B cell (primary cell): ENCODE measurements at regions of chr6 and their contacts with region 1.

Region 1: DNA sequence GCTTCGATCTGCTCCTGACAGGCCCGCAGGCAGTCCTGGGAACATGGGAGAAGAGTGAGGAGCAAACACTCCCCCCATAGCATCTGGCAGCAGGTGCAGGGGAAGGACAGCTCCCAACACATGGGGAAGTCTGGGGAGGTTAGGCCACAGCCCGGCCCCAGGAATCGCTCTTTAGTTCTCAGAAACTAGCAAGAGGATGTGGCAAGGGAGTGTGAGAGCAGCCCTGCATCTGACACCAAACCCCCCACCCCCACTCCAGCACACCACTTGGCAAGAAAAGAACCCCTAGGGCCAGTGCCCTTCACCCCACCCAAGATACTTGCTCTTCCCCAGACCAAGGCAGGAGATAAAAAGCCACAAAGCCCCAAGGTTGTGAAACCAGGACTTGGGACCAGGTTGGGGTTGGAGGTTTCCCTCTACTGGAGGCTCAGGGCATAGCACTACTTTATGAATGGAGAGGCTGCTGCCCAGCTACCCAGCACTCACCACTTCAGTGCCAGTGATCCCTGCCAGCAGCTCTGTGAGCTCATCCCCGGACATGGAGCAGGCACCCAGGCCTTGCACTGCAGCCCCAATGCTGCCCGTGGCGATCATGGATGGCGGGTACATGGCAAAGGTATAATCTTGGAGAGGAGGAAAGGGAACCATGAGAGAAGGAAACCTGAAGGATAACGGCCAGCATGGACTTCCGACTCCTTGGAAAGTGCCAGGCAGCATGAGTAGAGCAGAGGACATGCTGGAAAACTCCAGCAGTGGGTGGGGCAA is 5.4 kb downstream of the CCND3 start:
- DNase-seq: peak; percentile 78
- ATAC-seq: peak; percentile 74
- H3K4me3 ChIP-seq: no peak overlapping the region
- H3K4me3 Mint-ChIP-seq: peak overlapping the region; percentile 56
- H3K27ac ChIP-seq: peak overlapping the region; percentile 10 to 59
- H3K27ac Mint-ChIP-seq: peak overlapping the region; percentile 87
- H3K4me1 ChIP-seq: peaks cover 64 to 71% of the 10 kb centered on the region in 2 donors
- H3K4me1 Mint-ChIP-seq: peaks cover 65% of the 10 kb centered on the region
- H3K27me3 ChIP-seq: no peaks in the 10 kb centered on the region
- H3K27me3 Mint-ChIP-seq: no peaks in the 10 kb centered on the region
- CTCF ChIP-seq: peak; percentile 83

Region 2: GRCh38 chr6:41846666-41847237 is 89.5 kb before region 1 on chr6:
- CTCF ChIA-PET with region 1: interaction called, 19 read pairs
- POLR2A ChIA-PET with region 1: no interaction called
- intact Hi-C with region 1: loop called (anchors 1 kb)
- DNase-seq: peak; percentile 70
- ATAC-seq: peak; percentile 49
- H3K4me3 ChIP-seq: no peak overlapping the region
- H3K4me3 Mint-ChIP-seq: no peak overlapping the region
- H3K27ac ChIP-seq: no peak overlapping the region
- H3K27ac Mint-ChIP-seq: no peak overlapping the region
- H3K4me1 ChIP-seq: no peaks in the 10 kb centered on the region
- H3K4me1 Mint-ChIP-seq: no peaks in the 10 kb centered on the region
- H3K27me3 ChIP-seq: no peaks in the 10 kb centered on the region
- H3K27me3 Mint-ChIP-seq: no peaks in the 10 kb centered on the region
- CTCF ChIP-seq: peak; percentile 87

Region 3: DNA sequence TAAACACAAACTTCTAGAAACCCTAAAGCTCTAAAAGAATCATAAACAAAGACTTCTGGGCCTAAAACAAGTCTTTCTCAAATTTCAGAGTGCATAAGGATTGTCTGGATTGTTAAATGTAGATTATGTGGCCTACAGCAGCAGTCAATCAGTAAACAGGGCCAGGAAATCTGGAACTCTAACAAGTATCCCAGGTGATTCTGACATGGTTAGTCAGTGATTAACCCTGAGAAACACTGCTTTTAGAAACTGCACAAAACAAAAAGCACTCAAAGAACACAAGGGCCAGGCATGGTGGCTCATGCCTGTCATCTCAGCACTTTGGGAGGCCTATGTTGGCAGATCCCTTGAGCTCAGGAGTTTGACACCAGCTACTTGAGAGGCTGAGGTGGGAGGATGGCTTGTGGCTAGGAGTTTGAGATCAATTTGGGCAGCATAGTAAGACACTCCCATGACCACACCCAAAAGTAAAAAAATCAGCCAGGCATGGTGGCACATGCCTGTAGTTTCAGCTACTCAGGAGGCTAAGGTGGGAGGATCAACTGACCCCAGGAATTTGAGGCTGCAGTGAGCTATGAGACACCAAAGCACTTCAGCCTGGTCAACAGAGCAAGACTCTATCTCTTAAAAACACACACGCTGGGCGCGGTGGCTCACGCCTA is 21.3 kb before region 1 on chr6:
- CTCF ChIA-PET with region 1: interaction called, 30 read pairs
- POLR2A ChIA-PET with region 1: no interaction called
- intact Hi-C with region 1: no loop called
- DNase-seq: no peak
- ATAC-seq: no peak
- H3K4me3 ChIP-seq: no peak overlapping the region
- H3K4me3 Mint-ChIP-seq: no peak overlapping the region
- H3K27ac ChIP-seq: no peak overlapping the region
- H3K27ac Mint-ChIP-seq: no peak overlapping the region
- H3K4me1 ChIP-seq: peaks cover 4 to 5% of the 10 kb centered on the region in 2 donors
- H3K4me1 Mint-ChIP-seq: peaks cover 20% of the 10 kb centered on the region
- H3K27me3 ChIP-seq: no peaks in the 10 kb centered on the region
- H3K27me3 Mint-ChIP-seq: no peaks in the 10 kb centered on the region
- CTCF ChIP-seq: no peak

Region 4: DNA sequence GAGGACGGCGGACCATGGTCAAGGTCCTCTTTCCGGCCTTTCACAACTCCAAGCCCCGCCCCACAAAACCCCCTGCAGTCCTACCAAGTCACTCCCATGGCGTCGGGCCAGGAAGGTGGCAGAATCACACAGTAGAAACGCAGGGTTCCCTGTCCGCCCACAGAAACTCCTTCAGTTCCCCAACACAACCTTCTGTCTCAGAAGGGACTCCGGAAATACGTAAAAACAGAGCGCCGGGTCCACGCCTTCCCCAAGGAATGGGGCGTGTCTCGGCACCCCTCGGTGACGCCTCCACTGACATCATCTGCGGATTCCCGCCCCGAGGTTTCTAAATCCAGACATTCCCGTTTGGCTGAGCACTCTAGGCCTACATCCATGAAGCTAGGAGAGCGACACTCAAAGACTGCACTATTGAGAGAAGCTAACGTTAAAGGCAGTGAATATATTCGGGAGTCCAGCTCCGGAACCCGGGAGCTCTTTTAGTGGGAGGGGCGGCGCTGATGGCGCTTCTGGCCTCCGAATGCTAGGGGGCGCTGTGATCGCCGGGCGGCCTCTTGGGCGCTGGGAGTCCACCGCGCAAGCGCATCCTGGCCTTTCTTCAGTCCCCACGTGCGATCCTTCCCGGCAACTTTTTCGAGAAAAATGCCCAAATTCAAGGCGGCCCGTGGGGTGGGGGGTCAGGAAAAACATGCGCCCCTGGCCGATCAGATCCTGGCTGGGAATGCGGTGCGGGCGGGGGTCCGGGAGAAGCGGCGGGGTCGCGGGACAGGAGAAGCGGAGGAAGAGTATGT is 15.1 kb before region 1 on chr6 and contains the starts of genes BYSL and MED20:
- CTCF ChIA-PET with region 1: interaction called, 30 read pairs
- POLR2A ChIA-PET with region 1: interaction called, 3 read pairs
- intact Hi-C with region 1: loop called (anchors 1 kb)
- DNase-seq: peak; percentile 98
- ATAC-seq: peak; percentile 93
- H3K4me3 ChIP-seq: peak within 1 kb of the TSS; percentile 67 to 99 (median 97)
- H3K4me3 Mint-ChIP-seq: peak within 1 kb of the TSS; percentile 98
- H3K27ac ChIP-seq: peak within 1 kb of the TSS; percentile 91 to 96
- H3K27ac Mint-ChIP-seq: peak within 1 kb of the TSS; percentile 98
- H3K4me1 ChIP-seq: peaks cover 26 to 29% of the 10 kb centered on the region in 2 donors
- H3K4me1 Mint-ChIP-seq: peaks cover 47% of the 10 kb centered on the region
- H3K27me3 ChIP-seq: no peaks in the 10 kb centered on the region
- H3K27me3 Mint-ChIP-seq: no peaks in the 10 kb centered on the region
- CTCF ChIP-seq: peak; percentile 93
- total RNA-seq, gene BYSL: 10.5 and 11.1 TPM in 2 replicates
- total RNA-seq, gene MED20: 18.2 and 24.2 TPM in 2 replicates